ENCODE measurements at regions of chr10 and their contacts with region 1.

Region 1: GRCh38 chr10:133475821-133476640 is 22.3 kb downstream of the SCART1 start:
- DNase-seq: peak in 3 of 5 donors; percentile 17 to 42 (median 21)
- H3K4me3 ChIP-seq: no peak overlapping the region
- H3K4me3 Mint-ChIP-seq: peak overlapping the region; percentile 48 to 71 (median 66)
- H3K27ac ChIP-seq: peak overlapping the region; percentile 13
- H3K27ac Mint-ChIP-seq: peak overlapping the region in 6 of 7 donors; percentile 36 to 92 (median 80)
- H3K4me1 ChIP-seq: peaks cover 42% of the 10 kb centered on the region
- H3K4me1 Mint-ChIP-seq: peaks cover 25 to 46% (median 34%) of the 10 kb centered on the region in 4 donors
- H3K27me3 ChIP-seq: no peaks in the 10 kb centered on the region
- H3K27me3 Mint-ChIP-seq: no peaks in the 10 kb centered on the region

Region 2: DNA sequence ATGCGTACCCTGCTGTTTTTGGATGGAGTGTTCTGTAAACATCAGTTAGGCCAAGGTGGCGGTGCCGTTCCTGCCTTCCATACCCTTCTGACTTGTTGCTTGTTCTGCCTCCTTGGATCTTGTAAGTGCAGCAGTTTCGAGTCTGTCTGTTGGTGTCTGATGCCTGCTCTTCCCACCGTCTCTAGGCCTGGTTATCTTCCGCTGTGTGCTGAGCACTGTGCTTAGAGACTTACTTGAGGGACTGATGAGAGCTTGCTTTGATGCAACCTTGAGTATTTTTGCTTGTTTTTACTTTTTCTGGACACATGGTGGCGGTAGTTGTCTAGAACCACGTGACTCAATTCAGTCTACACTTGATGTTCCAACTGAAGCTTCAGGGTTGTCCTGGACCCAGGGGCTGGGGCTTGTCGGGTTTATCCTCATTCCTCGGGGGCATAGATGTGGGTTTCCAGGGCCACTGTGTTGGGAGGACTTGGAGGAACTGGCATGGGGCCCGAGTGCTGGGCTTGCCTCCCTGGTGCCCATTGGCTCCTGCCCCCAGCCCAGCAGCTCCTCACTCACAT is 37.2 kb before region 1 on chr10:
- CTCF ChIA-PET with region 1: interaction called, 5 read pairs
- POLR2A ChIA-PET with region 1: interaction called, 4 read pairs
- intact Hi-C with region 1: loop called (anchors 2 kb)
- DNase-seq: peak in 4 of 5 donors; percentile 31 to 42 (median 39)
- H3K4me3 ChIP-seq: no peak overlapping the region
- H3K4me3 Mint-ChIP-seq: peak overlapping the region in 4 of 8 donors; percentile 5 to 32 (median 13)
- H3K27ac ChIP-seq: no peak overlapping the region
- H3K27ac Mint-ChIP-seq: peak overlapping the region in 3 of 7 donors; percentile 30 to 49 (median 45)
- H3K4me1 ChIP-seq: peaks cover 41% of the 10 kb centered on the region
- H3K4me1 Mint-ChIP-seq: peaks cover 16 to 46% (median 36%) of the 10 kb centered on the region in 4 donors
- H3K27me3 ChIP-seq: no peaks in the 10 kb centered on the region
- H3K27me3 Mint-ChIP-seq: peaks cover 4 to 7% of the 10 kb centered on the region in 2 donors

Measured in CD4-positive, alpha-beta memory T cell (primary cell).